HEK293 (cell line): ENCODE measurements at regions of chr2 and their contacts with region 1.

Region 1: DNA sequence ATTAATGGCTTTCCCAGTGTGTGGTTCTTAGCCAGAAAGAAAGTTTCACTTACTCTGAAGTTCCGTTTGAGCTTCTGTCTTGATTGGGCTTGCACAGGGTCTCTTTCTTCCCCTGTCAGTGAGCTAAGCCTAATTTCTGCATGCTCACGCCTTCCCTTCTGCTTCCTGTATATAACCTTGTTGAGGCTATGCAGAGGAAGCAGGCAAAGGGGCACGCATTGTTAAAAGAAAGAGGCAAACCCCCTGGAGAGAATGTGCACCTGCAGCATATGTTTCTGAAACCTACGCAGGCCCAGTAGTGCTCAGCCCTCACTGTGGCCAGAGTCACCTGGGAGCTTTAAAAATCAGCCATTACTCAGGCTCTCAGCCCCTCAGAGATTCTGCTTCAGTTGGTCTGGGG is 14.5 kb upstream of the PLA2R1 start:
- H3K4me3 ChIP-seq: no peak overlapping the region
- H3K27ac ChIP-seq: no peak overlapping the region
- H3K4me1 ChIP-seq: no peaks in the 10 kb centered on the region
- CTCF ChIP-seq: no peak

Region 2: GRCh38 chr2:160087854-160088745 is 11.2 kb after region 1 on chr2:
- CTCF ChIA-PET with region 1: interaction called, 14 read pairs
- POLR2A ChIA-PET with region 1: no interaction called
- H3K4me3 ChIP-seq: no peak overlapping the region
- H3K27ac ChIP-seq: no peak overlapping the region
- H3K4me1 ChIP-seq: no peaks in the 10 kb centered on the region
- CTCF ChIP-seq: no peak